ENCODE measurements at regions of chr16 and their contacts with region 1.

Region 1: DNA sequence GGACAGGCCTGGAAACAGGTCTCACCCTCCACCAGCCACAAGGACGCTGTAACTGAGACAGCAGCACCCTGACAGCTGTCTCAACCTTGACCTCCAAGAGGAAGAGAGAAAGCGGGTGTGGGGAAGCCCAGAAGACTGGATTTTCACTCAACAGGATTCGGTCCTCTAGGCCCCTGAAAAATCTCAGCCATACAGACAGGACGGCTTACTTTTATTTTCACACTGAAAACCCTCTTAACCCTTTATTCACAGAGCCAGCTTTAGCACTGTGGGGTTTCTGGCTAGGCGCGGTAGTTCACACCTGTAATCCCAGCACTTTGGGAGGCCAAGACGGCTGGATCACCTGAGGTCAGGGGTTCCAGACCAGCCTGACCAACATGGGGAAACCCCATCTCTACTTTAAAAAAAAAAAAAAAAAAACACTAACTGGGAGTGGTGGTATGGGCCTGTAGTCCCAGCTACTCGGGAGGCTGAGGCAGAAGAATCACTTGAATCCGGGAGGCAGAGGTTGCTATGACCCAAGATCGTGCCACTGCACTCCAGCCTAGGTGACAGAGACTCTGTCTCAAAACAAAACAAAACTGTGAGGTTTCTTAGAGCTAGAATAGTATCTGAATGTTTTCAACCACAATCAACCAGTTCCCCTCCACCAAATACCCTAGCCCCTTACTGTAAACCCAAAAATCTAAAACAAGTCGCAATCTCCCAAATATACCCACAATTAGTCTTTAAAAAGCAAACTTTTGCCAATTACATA is 5.3 kb downstream of the ANKRD11 start:
- DNase-seq: no peak
- H3K4me3 Mint-ChIP-seq: peak overlapping the region; percentile 83
- H3K27ac Mint-ChIP-seq: peak overlapping the region; percentile 91
- H3K4me1 Mint-ChIP-seq: peaks cover 87% of the 10 kb centered on the region
- H3K27me3 Mint-ChIP-seq: no peaks in the 10 kb centered on the region

Region 2: GRCh38 chr16:89442990-89443731 is 41.9 kb before region 1 on chr16:
- intact Hi-C with region 1: loop called (anchors 1 kb)
- DNase-seq: no peak
- H3K4me3 Mint-ChIP-seq: peak overlapping the region; percentile 34
- H3K27ac Mint-ChIP-seq: peak overlapping the region; percentile 50
- H3K4me1 Mint-ChIP-seq: peaks cover 93% of the 10 kb centered on the region
- H3K27me3 Mint-ChIP-seq: no peaks in the 10 kb centered on the region

Region 3: GRCh38 chr16:89670496-89671431 is 185.7 kb after region 1 on chr16:
- intact Hi-C with region 1: no loop called
- DNase-seq: no peak
- H3K4me3 Mint-ChIP-seq: no peak overlapping the region
- H3K27ac Mint-ChIP-seq: no peak overlapping the region
- H3K4me1 Mint-ChIP-seq: peaks cover 6% of the 10 kb centered on the region
- H3K27me3 Mint-ChIP-seq: no peaks in the 10 kb centered on the region

Measured in activated T-helper 1 cell treated with anti-CD3 and anti-CD28 coated beads, Interleukin-12 subunit alpha, Interleukin-12 subunit beta, Interleukin-2, Interleukin-4 antibody, amounts not matched to agents 30 ng/mL and 10 ng/mL and 1 ng/mL, durations not matched to agents 14 hours and 24 hours and 36 hours (primary cell).